ENCODE measurements at regions of chr2 and their contacts with region 1.

Region 1: DNA sequence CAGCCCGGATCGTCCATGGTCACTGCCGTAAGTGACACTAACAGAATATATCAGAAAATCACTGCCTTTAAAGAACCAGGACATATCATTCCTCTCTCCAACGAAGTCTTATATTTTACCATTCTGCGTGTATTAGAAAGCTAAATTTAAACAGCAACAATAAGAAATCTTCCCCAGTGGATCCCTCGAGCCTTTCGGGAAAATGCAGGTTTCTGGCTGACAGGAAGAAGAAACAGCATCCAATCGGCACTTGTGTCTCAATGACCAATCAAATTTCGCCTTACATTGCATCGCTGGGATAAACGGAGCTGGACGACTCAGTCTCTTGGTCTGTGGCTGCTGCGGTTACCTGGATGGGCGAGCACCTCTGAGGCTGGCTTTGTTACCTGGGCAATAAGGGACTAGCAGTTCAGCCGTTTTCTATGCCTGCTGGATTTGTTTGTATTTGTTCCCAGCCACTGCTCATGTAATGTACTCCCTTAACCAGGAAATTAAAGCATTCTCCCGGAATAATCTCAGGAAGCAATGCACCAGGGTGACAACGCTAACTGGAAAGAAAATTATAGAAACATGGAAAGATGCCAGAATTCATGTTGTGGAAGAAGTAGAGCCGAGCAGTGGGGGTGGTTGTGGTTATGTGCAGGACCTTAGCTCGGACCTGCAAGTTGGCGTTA is at the start of gene DUSP19:
- DNase-seq: peak; percentile 80 to 85
- ATAC-seq: peak; percentile 94
- H3K4me3 ChIP-seq: peak within 1 kb of the TSS; percentile 88 to 94
- H3K27ac ChIP-seq: peak within 1 kb of the TSS; percentile 94 to 97
- H3K4me1 ChIP-seq: peaks cover 0 to 2% of the 10 kb centered on the region in 2 donors
- H3K27me3 ChIP-seq: no peaks in the 10 kb centered on the region
- total RNA-seq, gene DUSP19: 7.1 to 8.1 TPM

Region 2: DNA sequence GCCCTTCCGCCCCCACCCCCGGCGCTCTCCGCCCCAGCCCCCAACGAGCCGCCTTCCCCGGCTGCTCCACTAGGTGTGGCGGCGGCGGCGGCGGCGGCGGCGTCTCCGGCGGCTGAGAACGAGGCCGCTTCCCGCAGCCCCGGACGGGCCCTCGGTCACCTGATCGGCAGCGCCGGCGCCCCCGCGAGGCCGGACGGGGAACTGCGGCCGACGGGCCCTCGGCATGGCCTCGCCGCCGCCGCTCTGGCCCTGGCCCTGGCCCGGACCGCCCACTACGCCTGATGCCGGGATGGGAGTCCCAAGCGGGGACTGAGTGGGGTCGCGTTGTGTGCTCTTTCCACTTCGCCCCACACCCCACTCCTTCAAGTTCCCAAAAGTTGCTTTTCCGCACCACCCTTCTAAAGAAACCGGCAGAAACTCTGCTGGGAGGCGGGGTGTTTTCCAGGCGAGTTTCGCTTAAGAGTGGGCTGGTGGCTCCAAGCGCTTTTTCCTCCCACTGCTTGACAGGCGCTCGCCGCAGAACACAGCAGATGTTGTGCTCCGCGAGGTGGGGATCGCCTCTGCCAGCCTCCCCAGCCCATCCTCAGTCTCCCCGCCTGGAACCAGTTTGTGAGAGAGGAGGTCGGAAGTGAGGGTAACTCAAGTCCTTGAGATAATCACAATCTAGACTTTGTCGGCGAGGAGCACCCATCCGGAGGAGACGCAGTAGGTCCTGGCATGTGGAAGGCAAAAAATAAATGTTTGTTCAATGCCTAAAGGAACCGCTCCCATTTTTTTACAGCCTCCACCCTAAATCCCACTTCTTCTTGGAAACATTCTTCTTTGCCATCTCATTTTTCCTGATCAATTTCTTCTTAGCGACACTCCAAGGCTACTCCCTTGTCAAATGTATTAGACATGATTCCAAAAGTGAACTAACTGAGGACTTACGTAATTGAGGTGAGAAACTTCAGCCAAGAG is 40.0 kb before region 1 on chr2 and contains the start of gene NCKAP1:
- intact Hi-C with region 1: loop called (anchors 2 kb)
- DNase-seq: peak; percentile 91 to 97
- ATAC-seq: peak; percentile 98
- H3K4me3 ChIP-seq: peak within 1 kb of the TSS; percentile 91 to 98
- H3K27ac ChIP-seq: peak within 1 kb of the TSS; percentile 81 to 99
- H3K4me1 ChIP-seq: no peaks in the 10 kb centered on the region
- H3K27me3 ChIP-seq: no peaks in the 10 kb centered on the region
- total RNA-seq, gene NCKAP1: 192 to 207 TPM

Region 3: DNA sequence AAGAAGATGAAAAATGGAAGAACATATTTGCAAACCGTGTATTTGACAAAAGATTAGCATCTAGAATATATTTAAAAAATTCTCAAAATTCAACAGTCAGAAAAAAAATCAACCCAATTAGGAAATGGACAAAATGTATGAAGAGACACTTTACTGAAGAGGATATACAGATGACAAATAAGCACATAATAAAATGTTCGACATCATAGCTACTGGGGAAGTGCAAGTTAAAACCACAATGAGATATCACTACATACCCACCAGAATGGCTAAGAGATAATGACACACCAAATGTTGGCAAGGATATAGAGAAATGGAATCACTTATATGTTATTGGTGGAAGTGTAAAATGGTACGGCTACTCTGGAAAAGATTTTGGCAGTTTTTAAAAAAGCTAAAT is 34.0 kb after region 1 on chr2:
- intact Hi-C with region 1: no loop called
- DNase-seq: no peak
- ATAC-seq: no peak
- H3K4me3 ChIP-seq: no peak overlapping the region
- H3K27ac ChIP-seq: no peak overlapping the region
- H3K4me1 ChIP-seq: no peaks in the 10 kb centered on the region
- H3K27me3 ChIP-seq: no peaks in the 10 kb centered on the region

Region 4: GRCh38 chr2:183124222-183124956 is 45.8 kb after region 1 on chr2 and contains the start of gene NUP35:
- intact Hi-C with region 1: loop called in 1 of 2 experiments (anchors 2 kb)
- DNase-seq: peak; percentile 90
- ATAC-seq: peak; percentile 97
- H3K4me3 ChIP-seq: peak within 1 kb of the TSS; percentile 56 to 80
- H3K27ac ChIP-seq: peak within 1 kb of the TSS; percentile 4 to 56
- H3K4me1 ChIP-seq: no peaks in the 10 kb centered on the region
- H3K27me3 ChIP-seq: no peaks in the 10 kb centered on the region
- total RNA-seq, gene NUP35: 14.1 to 17.0 TPM